ENCODE measurements at regions of chr6 and their contacts with region 1.

Region 1: GRCh38 chr6:138403801-138404661 is at the start of gene HEBP2:
- DNase-seq: peak; percentile 87 to 97 (median 90)
- H3K4me3 ChIP-seq: peak within 1 kb of the TSS; percentile 2 to 73
- H3K4me3 Mint-ChIP-seq: peak within 1 kb of the TSS; percentile 84 to 90 (median 88)
- H3K27ac ChIP-seq: peak within 1 kb of the TSS; percentile 72
- H3K27ac Mint-ChIP-seq: peak within 1 kb of the TSS; percentile 84 to 92 (median 88)
- H3K4me1 ChIP-seq: peaks cover 22% of the 10 kb centered on the region
- H3K4me1 Mint-ChIP-seq: peaks cover 13 to 30% (median 26%) of the 10 kb centered on the region in 4 donors
- H3K27me3 ChIP-seq: no peaks in the 10 kb centered on the region
- H3K27me3 Mint-ChIP-seq: no peaks in the 10 kb centered on the region
- total RNA-seq, gene HEBP2: 47.2 to 52.7 TPM

Region 2: DNA sequence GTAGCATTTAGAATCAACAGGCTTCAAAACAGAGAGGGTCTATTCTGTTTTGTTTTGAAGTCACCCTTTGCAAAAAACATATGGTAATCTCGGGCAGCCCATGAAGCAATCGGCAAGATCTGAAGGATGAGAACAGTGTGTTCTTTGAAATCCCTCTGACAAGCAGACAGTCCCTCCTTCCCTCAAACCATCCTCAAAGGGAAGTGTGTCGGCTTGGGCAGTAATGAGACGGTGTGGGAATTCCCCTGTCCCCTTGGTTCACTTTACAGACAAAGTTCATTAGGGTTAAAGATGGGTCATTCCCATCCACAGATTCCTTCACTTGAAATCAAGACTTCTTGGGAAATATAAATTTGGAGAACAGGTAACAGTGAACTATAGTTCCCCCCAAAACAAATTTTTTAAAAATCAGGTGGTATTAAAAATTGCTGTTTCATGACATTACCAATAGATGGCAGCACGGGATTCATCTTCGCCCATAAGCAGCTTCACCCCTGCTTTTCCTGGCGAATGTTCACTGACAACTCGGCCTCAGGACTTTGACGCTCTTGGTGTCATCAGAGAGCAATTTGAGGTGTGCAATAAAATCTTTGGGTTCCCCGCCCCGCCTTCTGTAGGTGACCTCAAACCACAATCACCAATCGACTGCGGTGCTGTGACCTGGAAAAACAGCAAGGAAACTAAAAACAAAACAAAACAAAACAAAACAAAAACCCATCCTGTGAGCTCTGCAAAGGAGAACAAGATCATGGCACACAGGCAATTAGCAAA is 696.3 kb before region 1 on chr6:
- CTCF ChIA-PET with region 1: no interaction called
- POLR2A ChIA-PET with region 1: no interaction called
- intact Hi-C with region 1: loop called (anchors 10 kb)
- DNase-seq: peak; percentile 91 to 97 (median 96)
- H3K4me3 ChIP-seq: peak overlapping the region in 1 of 2 donors; percentile 36
- H3K4me3 Mint-ChIP-seq: peak overlapping the region; percentile 58 to 80 (median 72)
- H3K27ac ChIP-seq: peak overlapping the region; percentile 77
- H3K27ac Mint-ChIP-seq: peak overlapping the region; percentile 93 to 99 (median 98)
- H3K4me1 ChIP-seq: peaks cover 68% of the 10 kb centered on the region
- H3K4me1 Mint-ChIP-seq: peaks cover 39 to 70% (median 57%) of the 10 kb centered on the region in 4 donors
- H3K27me3 ChIP-seq: no peaks in the 10 kb centered on the region
- H3K27me3 Mint-ChIP-seq: peaks cover 0 to under 1% of the 10 kb centered on the region in 2 donors

Region 3: DNA sequence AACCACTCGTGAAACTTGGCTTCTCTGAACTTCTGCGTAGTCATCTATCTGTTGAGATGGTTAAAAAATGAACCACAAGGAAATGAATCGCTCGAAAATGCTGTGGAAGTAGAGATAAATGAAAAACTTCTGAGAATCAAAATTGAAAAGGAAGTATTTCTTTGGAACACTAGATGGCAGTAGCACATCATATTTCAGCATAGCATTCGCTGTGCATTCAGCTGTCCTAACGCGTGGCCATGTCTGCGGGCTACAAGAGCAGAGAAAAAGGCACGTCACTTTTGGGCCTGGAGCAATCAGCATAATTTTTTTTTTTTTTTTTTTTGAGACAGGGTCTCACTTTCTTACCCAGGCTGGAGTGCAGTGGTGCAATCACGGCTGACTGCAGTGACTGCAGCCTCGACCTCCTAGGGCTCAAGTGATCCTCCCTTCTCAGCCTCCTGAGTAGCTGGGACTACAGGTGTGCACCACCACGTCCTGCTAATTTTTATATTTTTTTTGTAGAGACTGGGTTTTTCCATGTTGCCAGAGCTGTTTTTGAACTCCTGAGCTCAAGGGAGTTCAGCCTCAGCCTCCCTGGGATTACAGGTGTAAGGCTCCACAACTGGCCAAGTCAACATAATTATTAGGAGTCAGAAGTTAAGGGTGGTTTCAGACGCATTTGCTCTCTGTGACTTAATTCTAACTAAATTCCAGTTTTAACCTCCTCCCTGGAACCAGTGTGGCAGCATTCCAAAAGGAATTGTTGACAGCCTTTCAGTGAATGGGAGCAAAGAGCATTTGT is 288.0 kb before region 1 on chr6:
- CTCF ChIA-PET with region 1: interaction called, 17 read pairs
- POLR2A ChIA-PET with region 1: interaction called, 3 read pairs
- intact Hi-C with region 1: no loop called
- DNase-seq: peak; percentile 53 to 64 (median 62)
- H3K4me3 ChIP-seq: no peak overlapping the region
- H3K4me3 Mint-ChIP-seq: peak overlapping the region in 1 of 8 donors; percentile 20
- H3K27ac ChIP-seq: no peak overlapping the region
- H3K27ac Mint-ChIP-seq: no peak overlapping the region
- H3K4me1 ChIP-seq: no peaks in the 10 kb centered on the region
- H3K4me1 Mint-ChIP-seq: peaks cover 3 to 5% (median 4%) of the 10 kb centered on the region in 4 donors
- H3K27me3 ChIP-seq: no peaks in the 10 kb centered on the region
- H3K27me3 Mint-ChIP-seq: peaks cover 20 to 21% of the 10 kb centered on the region in 2 donors

Region 4: GRCh38 chr6:138372711-138373463 is 31.1 kb before region 1 on chr6:
- CTCF ChIA-PET with region 1: interaction called, 6 read pairs
- POLR2A ChIA-PET with region 1: interaction called, 8 read pairs
- intact Hi-C with region 1: loop called (anchors 1 kb)
- DNase-seq: peak in 3 of 5 donors; percentile 2 to 21 (median 5)
- H3K4me3 ChIP-seq: no peak overlapping the region
- H3K4me3 Mint-ChIP-seq: no peak overlapping the region
- H3K27ac ChIP-seq: no peak overlapping the region
- H3K27ac Mint-ChIP-seq: no peak overlapping the region
- H3K4me1 ChIP-seq: no peaks in the 10 kb centered on the region
- H3K4me1 Mint-ChIP-seq: peaks cover 0 to 2% (median 0%) of the 10 kb centered on the region in 4 donors
- H3K27me3 ChIP-seq: no peaks in the 10 kb centered on the region
- H3K27me3 Mint-ChIP-seq: peaks cover 2 to 4% of the 10 kb centered on the region in 2 donors

Region 5: GRCh38 chr6:138455746-138456400 is 51.8 kb after region 1 on chr6:
- CTCF ChIA-PET with region 1: interaction called, 3 read pairs
- POLR2A ChIA-PET with region 1: interaction called, 30 read pairs
- intact Hi-C with region 1: loop called (anchors 2 kb)
- DNase-seq: peak; percentile 57 to 81 (median 74)
- H3K4me3 ChIP-seq: peak overlapping the region; percentile 12 to 47
- H3K4me3 Mint-ChIP-seq: peak overlapping the region; percentile 57 to 87 (median 72)
- H3K27ac ChIP-seq: peak overlapping the region; percentile 41
- H3K27ac Mint-ChIP-seq: peak overlapping the region; percentile 85 to 96 (median 89)
- H3K4me1 ChIP-seq: peaks cover 26% of the 10 kb centered on the region
- H3K4me1 Mint-ChIP-seq: peaks cover 13 to 37% (median 24%) of the 10 kb centered on the region in 4 donors
- H3K27me3 ChIP-seq: no peaks in the 10 kb centered on the region
- H3K27me3 Mint-ChIP-seq: no peaks in the 10 kb centered on the region

Region 6: DNA sequence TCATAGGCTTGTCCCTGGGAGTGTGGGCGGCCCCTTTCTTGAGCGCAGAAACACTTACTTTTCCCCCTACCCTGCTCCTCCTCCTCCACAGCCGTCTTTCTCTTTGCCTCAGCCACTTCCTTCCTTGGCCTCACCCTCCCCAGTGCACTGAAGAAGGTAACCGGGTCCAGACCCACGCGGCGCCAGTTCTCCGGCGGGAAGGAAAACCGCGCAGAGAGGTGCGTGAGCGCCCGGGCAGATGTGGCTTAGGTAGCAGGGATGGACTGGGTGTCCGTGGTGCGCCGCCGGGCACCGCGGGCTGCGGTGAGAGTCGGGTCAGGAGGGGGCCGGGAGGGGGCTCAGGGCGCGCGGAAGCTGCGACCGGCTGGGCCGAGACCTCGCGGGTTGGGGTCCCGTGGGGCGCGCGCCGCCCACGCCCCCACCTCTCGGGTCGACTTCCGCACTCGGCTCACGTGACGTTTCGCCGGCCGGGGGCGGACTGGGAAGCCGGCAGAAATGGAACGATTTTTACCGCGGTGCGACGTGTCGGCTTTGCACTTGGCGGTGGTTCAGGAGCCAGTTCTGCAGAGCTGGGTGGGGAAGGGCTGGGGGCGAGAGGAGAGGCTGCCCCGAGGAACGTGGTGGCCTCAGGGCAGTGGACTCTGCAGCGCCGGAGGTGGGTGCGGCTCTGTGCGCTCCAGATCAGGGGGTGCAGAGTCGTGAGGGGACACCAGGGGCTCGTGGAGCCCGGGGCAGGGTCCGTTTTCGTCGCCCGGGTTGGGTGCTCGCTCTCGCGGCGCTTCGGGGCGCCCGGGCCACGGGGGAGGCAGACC is 624.8 kb after region 1 on chr6 and contains the start of gene ABRACL:
- CTCF ChIA-PET with region 1: no interaction called
- POLR2A ChIA-PET with region 1: no interaction called
- intact Hi-C with region 1: loop called (anchors 5 kb)
- DNase-seq: peak; percentile 74 to 88 (median 75)
- H3K4me3 ChIP-seq: peak within 1 kb of the TSS; percentile 59 to 97
- H3K4me3 Mint-ChIP-seq: peak within 1 kb of the TSS in 5 of 8 donors; percentile 93 to 98 (median 95)
- H3K27ac ChIP-seq: peak within 1 kb of the TSS; percentile 88
- H3K27ac Mint-ChIP-seq: peak within 1 kb of the TSS; percentile 88 to 98 (median 92)
- H3K4me1 ChIP-seq: peaks cover 46% of the 10 kb centered on the region
- H3K4me1 Mint-ChIP-seq: peaks cover 22 to 34% (median 28%) of the 10 kb centered on the region in 4 donors
- H3K27me3 ChIP-seq: no peaks in the 10 kb centered on the region
- H3K27me3 Mint-ChIP-seq: no peaks in the 10 kb centered on the region
- total RNA-seq, gene ABRACL: 103 to 112 TPM

Region 7: DNA sequence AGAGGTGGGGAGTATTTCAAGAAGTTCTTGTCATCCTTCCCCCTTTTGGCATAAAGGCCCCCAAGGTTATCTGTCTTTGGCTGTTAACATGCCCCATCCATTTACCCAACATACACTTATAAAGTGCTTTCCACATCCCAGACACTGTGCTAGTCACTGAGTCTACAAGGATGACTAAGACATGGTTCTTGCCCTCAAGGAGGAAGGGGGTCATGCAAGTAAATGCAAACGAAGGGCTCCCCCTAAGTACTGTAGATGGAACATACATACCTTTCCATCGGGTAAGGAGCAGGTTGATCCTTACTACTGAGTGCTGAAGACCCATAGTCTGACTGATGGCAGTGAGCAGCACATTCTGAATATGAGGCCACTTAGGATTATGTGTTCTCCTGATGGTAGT is 769.1 kb after region 1 on chr6:
- CTCF ChIA-PET with region 1: no interaction called
- POLR2A ChIA-PET with region 1: no interaction called
- intact Hi-C with region 1: no loop called
- DNase-seq: peak in 3 of 5 donors; percentile 24 to 61 (median 25)
- H3K4me3 ChIP-seq: no peak overlapping the region
- H3K4me3 Mint-ChIP-seq: peak overlapping the region in 7 of 8 donors; percentile 20 to 69 (median 53)
- H3K27ac ChIP-seq: no peak overlapping the region
- H3K27ac Mint-ChIP-seq: peak overlapping the region; percentile 29 to 88 (median 77)
- H3K4me1 ChIP-seq: peaks cover 97% of the 10 kb centered on the region
- H3K4me1 Mint-ChIP-seq: peaks cover 81 to 93% (median 89%) of the 10 kb centered on the region in 4 donors
- H3K27me3 ChIP-seq: no peaks in the 10 kb centered on the region
- H3K27me3 Mint-ChIP-seq: no peaks in the 10 kb centered on the region

Measured in CD4-positive, alpha-beta memory T cell (primary cell).